A549 (cell line): ENCODE measurements at regions of chr17 and their contacts with region 1.

Region 1: GRCh38 chr17:1055751-1056645 is 59.1 kb downstream of the TIMM22 start:
- DNase-seq: peak; percentile 64 to 88
- ATAC-seq: peak; percentile 68 to 89
- H3K4me3 ChIP-seq: no peak overlapping the region
- H3K27ac ChIP-seq: no peak overlapping the region
- H3K4me1 ChIP-seq: peaks cover 5% of the 10 kb centered on the region
- CTCF ChIP-seq: peak; percentile 64
- EP300 ChIP-seq: no peak
- POLR2A ChIP-seq: no peak
- RAD21 ChIP-seq: peak; percentile 63 to 67

Region 2: DNA sequence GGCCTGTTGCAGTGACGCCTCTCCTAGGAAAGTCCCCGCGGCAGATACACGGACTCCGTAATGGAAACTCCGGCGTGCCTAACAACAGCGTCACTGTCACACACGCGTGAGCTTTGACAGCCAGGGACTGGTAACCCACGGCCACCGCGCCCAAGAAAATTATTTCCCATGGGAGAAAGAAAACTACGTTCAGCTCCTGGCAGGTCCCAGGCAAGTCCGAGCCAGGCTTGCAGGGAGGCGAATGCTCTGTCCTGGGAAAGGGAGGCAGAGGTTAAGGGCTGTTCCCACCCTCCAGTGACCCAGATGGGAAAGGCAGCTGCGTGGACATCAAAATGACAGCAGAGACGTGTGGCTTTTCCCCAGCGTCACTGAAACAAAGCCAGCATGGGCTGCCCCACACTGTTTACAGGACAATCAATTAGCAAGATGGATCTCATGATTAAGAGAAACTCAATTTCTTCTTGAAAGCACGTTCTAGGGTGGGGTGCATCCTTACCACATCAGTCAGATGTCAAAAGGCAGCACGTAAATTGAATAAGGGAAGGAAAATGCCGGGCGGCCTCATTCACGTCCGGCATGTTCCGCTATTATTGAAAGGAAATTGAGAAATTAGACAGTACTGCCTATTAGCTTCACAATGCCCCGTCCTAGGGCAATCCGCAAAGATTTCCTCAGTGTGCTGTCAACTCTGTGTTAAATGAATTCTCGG is 158.9 kb before region 1 on chr17:
- CTCF ChIA-PET with region 1: no interaction called
- POLR2A ChIA-PET with region 1: no interaction called
- DNase-seq: no peak
- ATAC-seq: no peak
- H3K4me3 ChIP-seq: no peak overlapping the region
- H3K27ac ChIP-seq: no peak overlapping the region
- H3K4me1 ChIP-seq: no peaks in the 10 kb centered on the region
- CTCF ChIP-seq: no peak
- EP300 ChIP-seq: no peak
- POLR2A ChIP-seq: no peak
- RAD21 ChIP-seq: no peak

Region 3: GRCh38 chr17:1022278-1023024 is 33.5 kb before region 1 on chr17:
- CTCF ChIA-PET with region 1: interaction called, 16 read pairs
- POLR2A ChIA-PET with region 1: no interaction called
- DNase-seq: no peak
- ATAC-seq: peak; percentile 7 to 18; a peak in 3 of 6 replicates
- H3K4me3 ChIP-seq: no peak overlapping the region
- H3K27ac ChIP-seq: no peak overlapping the region
- H3K4me1 ChIP-seq: no peaks in the 10 kb centered on the region
- CTCF ChIP-seq: no peak
- EP300 ChIP-seq: no peak
- POLR2A ChIP-seq: no peak
- RAD21 ChIP-seq: no peak

Region 4: DNA sequence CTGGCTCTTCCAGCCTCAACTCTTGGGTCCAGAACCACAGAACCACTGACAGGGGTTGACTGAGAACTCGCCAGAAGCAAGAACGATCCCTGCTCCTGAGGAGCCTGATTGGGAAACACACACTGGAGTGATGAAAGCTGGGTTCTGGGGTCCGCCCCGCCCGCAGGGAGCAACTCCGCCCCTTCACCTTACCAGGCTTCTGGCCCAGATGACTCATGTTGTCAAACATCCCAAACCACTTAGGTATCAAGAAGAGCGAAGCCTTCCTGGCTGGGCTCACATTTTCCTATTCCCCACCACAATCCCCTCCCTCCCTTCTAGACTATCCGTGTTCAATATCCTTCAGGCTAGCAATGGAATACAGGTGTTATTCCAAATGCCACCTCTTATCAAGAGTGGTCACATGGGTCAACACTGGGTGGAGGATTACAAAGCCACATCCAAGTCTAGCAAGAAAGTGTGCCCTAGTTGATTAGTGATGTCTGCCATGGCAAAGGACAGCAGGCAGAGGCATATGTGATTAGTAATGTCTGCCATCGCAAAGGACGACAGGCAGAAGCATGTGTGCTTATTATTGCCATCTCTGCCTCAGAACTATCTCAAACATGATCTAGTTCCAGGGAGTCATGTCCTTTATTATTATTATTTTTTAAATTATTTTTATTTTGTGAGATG is 11.4 kb after region 1 on chr17:
- CTCF ChIA-PET with region 1: interaction called, 13 read pairs
- POLR2A ChIA-PET with region 1: no interaction called
- DNase-seq: peak; percentile 39 to 50
- ATAC-seq: peak; percentile 44 to 48; a peak in 3 of 6 replicates
- H3K4me3 ChIP-seq: no peak overlapping the region
- H3K27ac ChIP-seq: no peak overlapping the region
- H3K4me1 ChIP-seq: peaks cover 9% of the 10 kb centered on the region
- CTCF ChIP-seq: no peak
- EP300 ChIP-seq: no peak
- POLR2A ChIP-seq: no peak
- RAD21 ChIP-seq: no peak

Region 5: GRCh38 chr17:1098387-1098786 is 42.4 kb after region 1 on chr17:
- CTCF ChIA-PET with region 1: interaction called, 13 read pairs
- POLR2A ChIA-PET with region 1: no interaction called
- DNase-seq: no peak
- ATAC-seq: peak; percentile 37 to 63; a peak in 5 of 6 replicates
- H3K4me3 ChIP-seq: no peak overlapping the region
- H3K27ac ChIP-seq: no peak overlapping the region
- H3K4me1 ChIP-seq: no peaks in the 10 kb centered on the region
- CTCF ChIP-seq: no peak
- EP300 ChIP-seq: no peak
- POLR2A ChIP-seq: no peak
- RAD21 ChIP-seq: no peak

Region 6: DNA sequence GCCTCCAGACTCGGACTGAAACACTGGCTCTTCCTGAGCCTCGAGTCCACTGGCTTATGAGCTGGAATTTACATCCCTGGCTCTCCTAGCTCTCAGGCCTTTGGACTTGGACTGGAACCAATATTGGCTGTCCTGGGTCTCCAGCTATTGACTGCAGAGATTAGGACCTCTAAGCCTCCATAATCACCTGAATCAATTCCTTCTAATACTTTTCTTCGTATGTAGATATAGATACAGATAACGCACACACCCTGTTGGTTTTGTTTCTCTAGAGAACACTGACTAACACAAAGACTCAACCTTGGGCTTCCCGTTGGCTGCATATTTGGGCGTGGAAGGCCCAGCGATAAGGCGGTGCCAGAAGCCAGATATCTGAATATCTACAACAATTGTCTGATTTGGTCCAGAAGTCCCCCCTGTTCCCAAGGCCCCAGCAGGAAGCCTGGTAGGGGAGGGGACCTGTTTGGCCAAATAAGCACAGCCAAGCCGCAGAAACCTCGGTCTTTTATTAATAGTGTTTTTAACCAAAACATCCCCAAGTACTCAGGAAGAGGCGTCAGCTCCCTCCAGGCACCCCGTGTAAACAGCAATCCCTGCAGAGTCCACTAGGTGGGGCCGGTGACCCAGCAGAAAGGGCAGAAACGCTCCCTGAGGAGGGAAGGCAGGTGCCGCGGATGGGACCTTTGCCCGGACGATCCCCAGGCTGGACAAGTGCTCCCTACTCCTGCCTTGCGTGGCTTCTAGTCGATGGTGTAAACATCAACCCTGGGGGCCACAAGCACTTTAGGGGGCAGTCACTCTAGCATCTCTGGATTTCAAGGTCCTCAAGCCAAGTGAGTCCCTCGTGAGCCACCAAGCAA is 66.8 kb after region 1 on chr17:
- CTCF ChIA-PET with region 1: interaction called, 77 read pairs
- POLR2A ChIA-PET with region 1: no interaction called
- DNase-seq: peak; percentile 71 to 91
- ATAC-seq: peak; percentile 72 to 94
- H3K4me3 ChIP-seq: no peak overlapping the region
- H3K27ac ChIP-seq: peak overlapping the region; percentile 31 to 44; a peak in 5 of 6 replicates
- H3K4me1 ChIP-seq: peaks cover 14% of the 10 kb centered on the region; the same call in 2 of the 3 replicates
- CTCF ChIP-seq: peak; percentile 92
- EP300 ChIP-seq: no peak
- POLR2A ChIP-seq: no peak
- RAD21 ChIP-seq: peak; percentile 92 to 93

Region 7: DNA sequence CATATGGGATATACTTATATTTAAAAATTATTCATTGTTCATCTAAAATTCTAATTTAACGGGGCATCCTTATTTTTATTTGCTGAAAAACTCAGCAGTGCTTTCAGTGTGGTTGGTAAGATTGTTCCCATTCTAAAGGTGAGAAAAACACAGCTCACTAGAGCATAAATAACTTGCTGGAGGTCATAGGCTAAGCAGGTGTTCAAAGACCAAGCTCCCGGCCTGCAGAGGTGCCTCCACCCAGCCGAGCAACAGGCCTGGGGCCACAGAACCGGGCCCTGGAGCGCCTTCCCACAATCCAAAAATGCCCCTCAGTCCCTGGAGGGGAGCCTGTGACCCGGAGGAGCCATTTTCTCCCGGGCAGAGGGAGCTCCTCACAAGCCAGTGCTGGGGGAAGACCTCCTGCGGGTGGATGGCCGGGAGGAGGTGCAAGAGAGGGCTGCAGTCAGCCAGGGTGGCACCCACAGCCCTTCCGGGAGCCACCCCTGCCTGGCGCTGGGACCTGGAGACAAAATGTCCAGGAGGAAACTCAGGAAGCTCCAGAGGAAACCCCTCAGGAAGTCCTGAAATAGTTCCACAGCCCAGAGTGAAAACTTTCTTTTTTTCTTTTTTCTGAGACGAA is 109.0 kb after region 1 on chr17:
- CTCF ChIA-PET with region 1: interaction called, 10 read pairs
- POLR2A ChIA-PET with region 1: no interaction called
- DNase-seq: no peak
- ATAC-seq: peak; percentile 16 to 48; a peak in 3 of 6 replicates
- H3K4me3 ChIP-seq: no peak overlapping the region
- H3K27ac ChIP-seq: no peak overlapping the region
- H3K4me1 ChIP-seq: no peaks in the 10 kb centered on the region
- CTCF ChIP-seq: no peak
- EP300 ChIP-seq: no peak
- POLR2A ChIP-seq: no peak
- RAD21 ChIP-seq: no peak

Region 8: GRCh38 chr17:1365445-1366039 is 309.5 kb after region 1 on chr17:
- CTCF ChIA-PET with region 1: no interaction called
- POLR2A ChIA-PET with region 1: no interaction called
- DNase-seq: peak; percentile 82 to 87
- ATAC-seq: peak; percentile 82 to 84
- H3K4me3 ChIP-seq: no peak overlapping the region
- H3K27ac ChIP-seq: peak overlapping the region in 1 of 2 experiments; percentile 25; a peak in 2 of 6 replicates
- H3K4me1 ChIP-seq: peaks cover 70% of the 10 kb centered on the region
- CTCF ChIP-seq: peak; percentile 96
- EP300 ChIP-seq: no peak
- POLR2A ChIP-seq: no peak
- RAD21 ChIP-seq: peak; percentile 84 to 88